Right ventricle myocardium superior (tissue), 1 donor: ENCODE measurements at regions of chr7 and their contacts with region 1.

Region 1: GRCh38 chr7:81499262-81500116 is 270.4 kb downstream of the HGF start:
- DNase-seq: no peak
- ATAC-seq: peak; percentile 94

Region 2: DNA sequence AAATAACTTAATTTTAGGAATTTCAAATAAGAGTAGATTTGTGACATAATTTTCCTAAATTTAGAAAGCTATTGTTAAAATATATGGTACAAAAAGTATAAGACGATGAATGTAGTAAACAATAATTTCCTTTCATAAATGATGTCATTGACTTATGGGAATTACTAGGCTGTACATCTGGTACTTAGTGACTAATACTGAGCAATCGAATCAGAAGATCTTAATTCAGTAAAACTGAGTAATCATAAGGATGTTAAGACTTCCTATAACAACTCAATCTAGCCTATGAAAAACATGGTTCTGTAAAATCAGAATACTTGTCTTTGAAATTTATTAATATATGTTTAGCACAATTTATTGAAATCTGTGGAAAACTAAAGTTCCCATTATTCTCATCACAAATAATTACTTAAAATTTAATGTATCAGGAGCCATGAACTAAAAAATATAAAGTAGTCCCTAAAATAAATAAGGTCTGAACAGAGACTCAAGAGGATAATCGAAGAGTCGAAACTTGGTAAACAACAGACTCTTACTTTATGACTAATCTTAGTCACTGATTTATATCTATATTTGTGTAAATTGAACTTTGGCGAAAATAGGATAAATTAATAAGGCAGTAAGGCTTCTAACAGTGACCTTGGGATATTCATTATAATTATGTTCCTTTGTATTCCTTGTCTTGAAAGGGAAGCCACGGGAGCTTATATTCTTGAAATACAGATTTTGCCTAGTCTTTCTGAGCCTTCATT is 128.2 kb after region 1 on chr7:
- intact Hi-C with region 1: no loop called
- DNase-seq: no peak
- ATAC-seq: no peak

Region 3: GRCh38 chr7:81704595-81704994 is 205.1 kb after region 1 on chr7:
- intact Hi-C with region 1: loop called (anchors 10 kb)
- DNase-seq: no peak
- ATAC-seq: no peak

Region 4: DNA sequence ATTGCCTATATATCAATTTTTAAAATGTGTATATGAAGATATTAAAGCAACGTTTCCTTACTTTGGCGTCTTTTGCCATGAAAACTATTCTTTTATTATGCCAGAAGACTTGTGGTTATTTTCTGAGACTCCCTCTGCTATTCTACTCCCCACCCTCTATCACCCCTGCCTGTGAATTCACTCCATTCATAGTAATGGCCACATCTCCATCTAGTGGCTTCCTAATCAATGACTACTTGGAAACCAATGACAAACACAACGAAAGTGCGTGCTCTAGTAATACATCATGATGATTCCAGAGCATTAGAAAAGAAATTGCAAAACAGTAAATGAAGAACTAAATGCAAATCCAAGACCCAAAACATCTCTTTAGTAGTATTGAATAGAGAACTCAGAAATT is 457.0 kb after region 1 on chr7:
- intact Hi-C with region 1: loop called (anchors 5 kb)
- DNase-seq: no peak
- ATAC-seq: peak; percentile 92

Region 5: GRCh38 chr7:82017334-82017943 is 518.0 kb after region 1 on chr7:
- intact Hi-C with region 1: loop called (anchors 5 kb)
- DNase-seq: no peak
- ATAC-seq: no peak

Region 6: DNA sequence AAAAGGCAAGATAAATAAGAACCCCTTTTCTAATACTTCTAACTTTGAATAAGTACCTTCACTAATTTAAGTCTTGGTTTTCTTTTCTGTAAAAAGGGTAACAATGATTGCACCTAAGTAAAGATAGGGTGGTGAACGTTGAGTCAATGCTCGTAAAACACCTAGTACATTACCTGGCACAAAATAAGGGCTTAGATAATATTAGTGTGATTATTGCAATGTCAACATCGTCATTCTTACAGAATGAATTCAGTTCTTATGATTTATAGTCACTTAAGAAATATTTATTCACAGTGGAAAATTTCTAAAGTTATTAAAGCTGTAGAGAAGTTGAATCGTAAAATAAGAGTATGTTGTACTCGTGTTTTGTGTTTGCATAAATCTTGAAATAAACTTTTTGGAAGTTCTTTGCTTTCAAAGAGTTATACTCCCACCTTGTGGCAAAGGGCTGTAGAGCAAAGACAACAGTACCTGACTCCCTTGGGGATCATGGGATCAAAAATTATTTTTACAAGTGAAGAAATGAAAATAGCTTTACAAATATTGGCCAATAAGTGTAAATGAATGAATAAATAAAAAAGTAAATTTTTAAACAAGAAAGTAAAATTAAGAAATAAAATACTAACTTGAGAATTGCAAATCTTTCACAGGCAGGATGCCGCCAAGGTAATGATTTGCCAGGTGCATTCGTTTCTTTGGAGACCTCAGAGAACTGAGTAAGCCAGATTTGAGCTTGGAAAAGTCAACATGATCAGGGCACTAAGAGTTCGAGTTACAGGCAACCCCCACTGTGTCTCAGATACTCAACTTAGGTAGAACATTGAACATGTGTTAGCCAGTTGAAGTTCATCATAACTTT is 1229.9 kb after region 1 on chr7:
- intact Hi-C with region 1: loop called (anchors 5 kb)
- DNase-seq: no peak
- ATAC-seq: no peak